ENCODE measurements at regions of chr2 and their contacts with region 1.

Region 1: DNA sequence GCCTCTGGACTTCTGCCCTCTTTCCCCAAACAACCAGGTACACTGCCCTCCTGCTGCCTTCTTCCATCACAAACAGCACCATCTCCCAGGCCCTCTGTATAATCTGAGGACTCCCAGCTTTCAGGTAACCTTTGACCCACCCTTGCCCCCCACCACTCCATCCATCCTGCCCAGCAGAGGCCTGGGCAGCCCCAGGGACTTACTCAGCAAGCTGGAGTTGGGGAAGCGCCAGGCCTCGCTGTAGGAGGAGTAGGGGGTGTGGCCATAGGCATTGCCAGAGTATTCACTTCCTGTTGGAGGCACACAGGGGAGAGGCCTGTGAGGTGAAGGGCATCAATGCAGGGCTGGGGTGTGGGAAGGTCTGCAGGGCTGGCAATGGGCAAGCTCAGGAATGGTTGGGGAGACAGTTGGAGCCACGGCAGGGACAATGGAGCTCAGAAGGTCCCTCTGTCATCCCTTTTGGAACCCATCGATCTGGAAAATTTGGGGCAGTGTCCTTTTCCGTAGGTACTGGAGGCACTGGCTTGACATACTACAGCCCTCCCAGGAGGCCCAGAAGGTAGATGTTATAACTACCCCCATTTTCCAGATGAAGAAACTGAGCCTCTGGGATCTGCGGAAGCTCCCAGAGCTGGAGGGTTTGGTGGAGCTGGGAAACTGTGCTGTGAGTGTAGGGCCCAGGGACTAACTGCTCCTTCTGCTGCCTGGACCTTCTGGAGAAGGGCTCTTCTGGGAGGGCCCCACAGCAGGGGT is 46.3 kb downstream of the PSD4 start:
- DNase-seq: peak; percentile 38 to 51
- ATAC-seq: peak in 5 of 8 donors; percentile 30 to 66 (median 46)
- H3K4me3 ChIP-seq: no peak overlapping the region
- H3K27ac ChIP-seq: peak overlapping the region in 3 of 10 donors; percentile 19 to 85 (median 26)
- H3K4me1 ChIP-seq: peaks cover 7 to 41% (median 27%) of the 10 kb centered on the region in 9 donors
- H3K27me3 ChIP-seq: no peaks in the 10 kb centered on the region
- CTCF ChIP-seq: no peak

Region 2: DNA sequence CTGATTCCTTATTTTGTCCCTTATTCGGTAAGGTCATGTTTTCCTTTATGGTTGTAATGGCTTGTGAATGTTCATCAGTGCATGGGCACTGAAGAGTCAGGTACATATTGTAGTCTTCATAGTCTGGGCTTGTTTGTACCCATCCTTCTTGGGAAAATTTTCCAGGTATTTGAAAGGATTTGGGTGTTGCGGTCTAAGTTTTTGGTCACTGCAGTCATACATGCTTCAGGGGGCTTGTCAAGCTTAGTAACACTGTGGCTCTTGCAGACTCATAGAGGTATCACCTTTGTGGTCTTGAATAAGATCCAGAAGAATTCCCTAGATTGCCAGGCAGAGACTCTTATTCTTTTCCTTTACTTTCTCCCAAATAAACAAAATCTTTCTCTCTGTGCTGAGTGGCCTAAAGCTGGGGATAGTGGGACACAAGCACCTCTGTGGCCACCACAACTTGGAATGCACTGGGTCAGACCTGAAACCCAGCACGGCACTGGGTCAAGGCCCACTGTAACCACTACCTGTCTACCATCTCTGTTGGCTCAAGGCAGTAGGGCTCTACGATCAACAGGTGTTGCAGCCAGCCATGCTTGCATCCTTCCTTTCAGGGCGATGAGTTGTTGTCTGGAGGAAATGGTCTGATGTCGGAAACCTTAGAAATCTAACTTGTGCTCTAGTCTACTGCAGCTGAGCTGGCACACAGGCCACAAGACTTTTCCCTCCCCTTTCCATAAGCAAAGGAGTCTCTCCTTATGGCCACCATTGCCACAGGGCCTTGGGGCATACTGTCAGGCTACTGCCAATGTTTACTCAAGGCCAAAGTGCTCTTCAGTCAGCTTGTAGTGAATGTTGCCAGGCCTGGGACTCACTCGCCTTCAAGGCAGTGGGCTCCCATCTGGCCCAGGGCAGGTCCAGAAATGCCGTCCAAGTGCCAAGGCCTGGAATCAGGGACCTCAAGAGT is 71.2 kb before region 1 on chr2:
- intact Hi-C with region 1: no loop called
- DNase-seq: no peak
- ATAC-seq: no peak
- H3K4me3 ChIP-seq: no peak overlapping the region
- H3K27ac ChIP-seq: no peak overlapping the region
- H3K4me1 ChIP-seq: no peaks in the 10 kb centered on the region
- H3K27me3 ChIP-seq: peaks cover 0 to 5% (median 0%) of the 10 kb centered on the region in 7 donors
- CTCF ChIP-seq: no peak

Region 3: DNA sequence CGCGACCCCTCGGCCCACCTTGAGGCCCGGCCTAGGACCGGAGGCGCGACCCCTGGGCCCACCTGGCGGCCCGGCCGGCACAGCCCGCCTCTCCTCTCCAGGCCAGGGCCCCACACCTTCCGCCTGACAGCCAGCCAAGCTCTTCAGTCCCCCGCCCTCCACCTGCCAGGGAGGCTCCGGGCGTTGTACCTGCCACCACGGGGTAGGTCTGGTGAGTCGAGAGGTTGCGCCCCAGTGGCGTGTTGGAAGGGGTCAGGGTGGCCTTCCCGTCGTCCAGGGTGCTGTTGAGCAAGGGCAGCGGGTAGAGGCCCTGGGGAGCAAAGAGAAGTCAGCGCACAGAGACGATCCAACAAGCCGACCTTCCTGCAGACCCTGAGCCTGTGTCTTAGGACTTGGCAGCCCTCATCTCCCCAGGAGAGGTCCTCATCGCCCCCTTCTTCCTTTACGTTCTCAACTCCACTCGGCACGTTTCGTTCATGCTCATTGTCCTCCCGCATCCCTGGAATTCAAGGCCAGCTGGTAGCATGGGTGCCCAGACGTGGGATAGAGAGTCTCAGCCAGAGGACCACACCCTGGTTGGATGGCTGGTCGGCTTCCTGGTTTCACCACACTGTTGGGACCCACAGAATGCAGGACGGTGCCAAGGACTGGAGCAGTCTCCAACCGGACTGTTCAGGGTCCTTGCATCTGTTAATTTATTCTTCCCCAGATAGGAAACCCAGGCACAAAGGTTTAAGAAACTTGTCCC is 16.5 kb after region 1 on chr2:
- intact Hi-C with region 1: loop called in 1 of 10 experiments (anchors 2 kb)
- DNase-seq: no peak
- ATAC-seq: no peak
- H3K4me3 ChIP-seq: peak overlapping the region in 5 of 10 donors; percentile 39 to 67 (median 52)
- H3K27ac ChIP-seq: peak overlapping the region in 2 of 10 donors; percentile 85 to 88
- H3K4me1 ChIP-seq: peaks cover 12 to 48% (median 33%) of the 10 kb centered on the region in 9 donors
- H3K27me3 ChIP-seq: no peaks in the 10 kb centered on the region
- CTCF ChIP-seq: no peak